WTC11 (cell line): ENCODE measurements at regions of chr6 and their contacts with region 1.

Region 1: DNA sequence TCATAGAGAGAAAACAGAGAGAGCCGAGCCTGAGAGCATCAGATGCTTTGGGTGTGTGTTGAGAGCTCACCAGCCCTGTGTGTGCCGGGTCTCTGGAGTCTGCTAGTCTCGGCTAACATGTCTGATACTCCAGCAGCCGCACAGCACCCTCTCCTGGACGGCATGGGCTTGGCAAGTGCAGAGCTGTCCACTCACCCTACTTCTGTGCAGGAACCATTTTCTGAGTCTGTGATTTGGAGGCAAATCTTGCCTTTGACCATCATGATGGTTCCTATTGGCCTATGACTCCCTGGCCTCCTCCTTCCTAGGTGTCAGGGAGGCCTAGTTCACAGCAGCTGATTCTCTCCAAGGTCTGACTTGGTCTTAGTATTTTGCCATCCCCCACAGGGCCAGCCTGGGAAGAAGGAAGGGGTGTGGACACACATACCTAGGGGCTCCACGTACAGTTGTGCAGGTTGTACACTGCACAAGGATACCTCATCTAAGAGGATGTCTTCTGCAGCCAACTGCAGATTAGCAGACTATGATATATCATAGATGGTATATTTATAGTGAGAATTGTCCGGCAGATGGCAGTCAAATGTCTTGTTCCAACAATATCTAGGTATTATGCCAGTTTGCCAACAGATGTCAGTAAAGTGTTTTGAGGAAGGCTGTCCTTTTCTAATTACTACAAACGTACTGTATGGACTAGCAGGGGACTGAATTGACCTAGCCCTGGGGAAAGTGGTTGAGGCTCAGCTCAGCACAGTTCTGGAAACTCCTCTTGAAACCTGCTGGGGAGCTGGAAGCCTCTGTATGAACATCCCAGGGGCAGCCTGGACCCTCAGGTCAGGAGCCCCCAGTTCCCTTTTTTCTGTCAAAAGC is 13.0 kb downstream of the FGD2 start:
- DNase-seq: peak; percentile 95
- ATAC-seq: peak; percentile 90
- H3K4me3 Mint-ChIP-seq: no peak overlapping the region
- H3K27ac Mint-ChIP-seq: no peak overlapping the region; the same call in 1 of the 2 replicates
- H3K4me1 Mint-ChIP-seq: peaks cover 25% of the 10 kb centered on the region
- H3K27me3 Mint-ChIP-seq: no peaks in the 10 kb centered on the region
- CTCF ChIP-seq: peak; percentile 78

Region 2: GRCh38 chr6:36874443-36875249 is 143.8 kb before region 1 on chr6 and contains the start of gene PPIL1:
- CTCF ChIA-PET with region 1: interaction called, 16 read pairs
- POLR2A ChIA-PET with region 1: no interaction called
- DNase-seq: peak; percentile 74
- ATAC-seq: peak; percentile 87
- H3K4me3 Mint-ChIP-seq: peak within 1 kb of the TSS; percentile 93
- H3K27ac Mint-ChIP-seq: peak within 1 kb of the TSS; percentile 100
- H3K4me1 Mint-ChIP-seq: peaks cover 19% of the 10 kb centered on the region
- H3K27me3 Mint-ChIP-seq: peaks cover 17% of the 10 kb centered on the region
- CTCF ChIP-seq: no peak
- total RNA-seq, gene PPIL1: 64.2 to 69.8 TPM (median 66.6 TPM) in 3 replicates

Region 3: DNA sequence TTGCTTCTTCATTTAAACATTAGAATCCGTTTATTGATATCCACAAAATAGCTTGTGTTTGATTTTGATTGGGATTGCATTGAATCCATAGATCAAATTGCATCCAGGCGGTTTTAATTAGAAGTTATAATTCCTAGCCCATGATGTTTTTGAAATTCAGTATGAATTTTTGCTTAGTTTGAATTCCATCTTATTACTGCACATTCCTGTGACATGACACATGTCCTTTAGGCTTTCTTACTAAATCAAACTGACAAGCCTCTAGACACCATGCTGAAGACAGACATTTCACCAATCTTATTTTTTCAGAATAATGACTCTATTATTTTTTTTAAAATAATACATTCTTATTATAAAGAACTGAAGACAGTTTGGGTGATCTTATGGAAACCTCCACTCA is 85.3 kb before region 1 on chr6:
- CTCF ChIA-PET with region 1: interaction called, 18 read pairs
- POLR2A ChIA-PET with region 1: interaction called, 3 read pairs
- DNase-seq: no peak
- ATAC-seq: no peak
- H3K4me3 Mint-ChIP-seq: no peak overlapping the region
- H3K27ac Mint-ChIP-seq: no peak overlapping the region
- H3K4me1 Mint-ChIP-seq: peaks cover 4% of the 10 kb centered on the region
- H3K27me3 Mint-ChIP-seq: no peaks in the 10 kb centered on the region
- CTCF ChIP-seq: no peak

Region 4: GRCh38 chr6:36979347-36979742 is 39.1 kb before region 1 on chr6:
- CTCF ChIA-PET with region 1: interaction called, 100 read pairs
- POLR2A ChIA-PET with region 1: interaction called, 6 read pairs
- DNase-seq: no peak
- ATAC-seq: no peak
- H3K4me3 Mint-ChIP-seq: no peak overlapping the region
- H3K27ac Mint-ChIP-seq: peak overlapping the region; percentile 37
- H3K4me1 Mint-ChIP-seq: peaks cover 21% of the 10 kb centered on the region
- H3K27me3 Mint-ChIP-seq: no peaks in the 10 kb centered on the region
- CTCF ChIP-seq: no peak

Region 5: GRCh38 chr6:37029249-37029971 is 11.0 kb after region 1 on chr6:
- CTCF ChIA-PET with region 1: interaction called, 55 read pairs
- POLR2A ChIA-PET with region 1: no interaction called
- DNase-seq: peak; percentile 73
- ATAC-seq: peak; percentile 86
- H3K4me3 Mint-ChIP-seq: no peak overlapping the region
- H3K27ac Mint-ChIP-seq: no peak overlapping the region
- H3K4me1 Mint-ChIP-seq: no peaks in the 10 kb centered on the region
- H3K27me3 Mint-ChIP-seq: no peaks in the 10 kb centered on the region
- CTCF ChIP-seq: peak; percentile 75

Region 6: GRCh38 chr6:37222125-37222967 is 203.9 kb after region 1 on chr6:
- CTCF ChIA-PET with region 1: interaction called, 11 read pairs
- POLR2A ChIA-PET with region 1: no interaction called
- DNase-seq: peak; percentile 94
- ATAC-seq: peak; percentile 96
- H3K4me3 Mint-ChIP-seq: peak overlapping the region; percentile 86
- H3K27ac Mint-ChIP-seq: peak overlapping the region; percentile 91
- H3K4me1 Mint-ChIP-seq: peaks cover 13% of the 10 kb centered on the region
- H3K27me3 Mint-ChIP-seq: no peaks in the 10 kb centered on the region
- CTCF ChIP-seq: no peak